Dorsolateral prefrontal cortex (tissue), 120 donors: ENCODE measurements at regions of chr3 and their contacts with region 1.

Region 1: DNA sequence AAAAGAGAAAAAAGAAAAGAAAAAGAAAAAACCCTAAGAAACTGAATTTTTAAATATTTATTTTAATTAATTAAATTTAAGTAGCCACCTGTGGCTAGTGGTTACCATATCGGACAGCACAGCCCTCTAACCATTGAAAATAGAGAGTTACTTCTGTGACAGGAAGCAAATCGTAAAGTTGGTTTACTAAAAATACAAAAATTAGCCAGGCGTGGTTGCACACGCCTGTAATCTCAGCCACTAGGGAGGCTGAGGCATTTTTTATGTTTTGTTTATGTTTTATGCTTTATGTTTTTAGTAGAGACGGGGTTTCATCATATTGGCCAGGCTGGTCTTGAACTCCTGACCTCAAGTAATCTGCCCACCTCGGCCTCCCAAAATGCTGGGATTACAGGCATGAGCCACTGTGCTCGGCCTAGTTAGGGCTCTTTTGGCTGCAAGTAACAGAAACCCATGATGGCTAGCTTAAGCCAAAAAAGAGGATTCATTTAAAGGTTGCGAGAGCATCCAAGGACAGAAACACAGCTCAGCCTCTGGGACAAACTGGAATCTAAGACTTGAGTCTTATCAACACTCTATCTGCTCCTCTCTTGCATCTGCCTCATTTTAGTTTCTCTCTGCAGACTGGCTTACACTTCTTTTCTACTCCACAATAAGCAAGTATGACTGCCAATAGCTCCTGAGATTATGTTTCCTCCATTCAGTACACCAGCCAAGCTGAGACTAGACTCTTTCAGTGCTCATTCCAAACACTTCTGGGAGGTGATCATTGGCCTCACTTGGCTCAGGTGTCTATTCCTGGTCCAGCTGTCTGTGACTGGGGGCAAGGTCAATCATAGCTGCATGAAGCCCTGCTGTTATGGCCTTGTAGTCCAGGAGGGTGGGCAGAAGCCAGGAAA is 6.8 kb upstream of the SKIL start:
- DNase-seq: no peak
- H3K4me3 ChIP-seq: no peak overlapping the region
- H3K27ac ChIP-seq: no peak overlapping the region
- H3K27me3 ChIP-seq: no peaks in the 10 kb centered on the region
- CTCF ChIP-seq: no peak

Region 2: DNA sequence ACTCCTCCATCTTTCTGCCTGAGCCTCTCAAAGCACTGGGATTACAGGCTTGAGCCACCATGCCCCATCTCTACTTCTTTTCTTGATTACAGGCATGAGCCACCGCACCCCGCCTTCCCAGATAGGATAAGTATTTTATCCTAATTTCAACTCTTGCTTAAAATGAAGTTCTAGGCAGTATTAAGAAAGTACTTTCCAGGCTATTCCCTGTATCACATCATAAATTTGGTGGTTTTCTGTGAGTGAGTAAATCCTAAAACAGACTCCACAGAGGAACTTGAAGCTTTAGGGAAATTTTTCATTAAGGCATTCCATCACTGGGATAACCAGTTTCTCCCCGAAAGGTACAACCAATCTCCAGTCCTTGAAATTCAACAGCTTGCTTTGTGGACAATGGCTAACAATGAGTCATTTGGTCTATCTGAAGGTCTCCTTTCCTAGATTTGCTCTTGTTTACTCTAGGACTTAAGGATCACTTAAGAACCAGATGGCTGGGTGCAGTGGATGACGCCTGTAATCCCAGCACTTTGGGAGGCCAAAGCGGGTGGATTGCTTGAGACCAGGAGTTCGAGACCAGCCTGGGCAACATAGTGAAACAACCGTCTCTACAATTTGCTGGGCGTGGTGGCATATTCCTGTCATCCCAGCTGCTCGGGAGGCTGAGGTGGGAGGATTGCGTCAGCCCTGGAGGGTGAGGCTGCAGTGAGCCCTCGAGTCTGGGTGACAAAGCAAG is 42.9 kb before region 1 on chr3:
- intact Hi-C with region 1: loop called in 1 of 2 experiments (anchors 5 kb)
- DNase-seq: no peak
- H3K4me3 ChIP-seq: no peak overlapping the region
- H3K27ac ChIP-seq: no peak overlapping the region
- H3K27me3 ChIP-seq: no peaks in the 10 kb centered on the region
- CTCF ChIP-seq: no peak